Activated CD8-positive, alpha-beta T cell treated with anti-CD3 and anti-CD28 coated beads for 36 hours (primary cell): ENCODE measurements at regions of chr7 and their contacts with region 1.

Region 1: DNA sequence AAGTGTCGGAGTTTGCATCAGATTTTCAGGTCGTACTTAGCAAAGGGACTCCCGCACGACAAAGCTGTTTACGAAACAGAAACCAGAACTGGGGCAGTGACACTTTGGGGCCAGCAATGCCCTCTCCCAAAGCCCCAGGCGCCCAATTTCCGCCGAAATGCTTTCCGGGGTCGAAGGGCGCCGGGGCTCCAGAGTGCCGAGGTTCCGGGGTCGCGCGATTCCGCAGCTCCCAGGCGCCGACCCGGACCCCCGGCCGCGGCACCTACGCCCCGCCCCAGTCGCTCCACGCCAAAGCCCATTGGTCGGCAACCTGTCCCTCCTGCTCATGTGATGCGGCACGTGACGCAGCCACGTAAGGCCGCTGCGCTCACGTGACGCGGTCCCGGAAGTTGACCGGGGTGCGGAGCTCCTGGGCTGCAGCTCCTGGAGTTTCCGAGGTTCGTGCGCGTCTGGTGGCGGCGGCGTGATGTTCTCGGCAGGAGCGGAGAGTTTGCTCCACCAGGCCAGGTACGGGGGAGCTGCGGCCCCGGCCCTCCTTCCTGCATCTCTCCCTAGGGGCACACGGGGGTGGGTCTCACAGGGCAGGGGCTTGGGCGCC is at the start of gene AP5Z1:
- DNase-seq: peak; percentile 97
- ATAC-seq: peak; percentile 96
- H3K4me3 Mint-ChIP-seq: peak within 1 kb of the TSS; percentile 99
- H3K27ac Mint-ChIP-seq: peak within 1 kb of the TSS; percentile 98
- H3K4me1 Mint-ChIP-seq: peaks cover 36% of the 10 kb centered on the region
- H3K27me3 Mint-ChIP-seq: no peaks in the 10 kb centered on the region
- CTCF ChIP-seq: no peak
- total RNA-seq, gene AP5Z1: 21.2 to 21.3 TPM

Region 2: DNA sequence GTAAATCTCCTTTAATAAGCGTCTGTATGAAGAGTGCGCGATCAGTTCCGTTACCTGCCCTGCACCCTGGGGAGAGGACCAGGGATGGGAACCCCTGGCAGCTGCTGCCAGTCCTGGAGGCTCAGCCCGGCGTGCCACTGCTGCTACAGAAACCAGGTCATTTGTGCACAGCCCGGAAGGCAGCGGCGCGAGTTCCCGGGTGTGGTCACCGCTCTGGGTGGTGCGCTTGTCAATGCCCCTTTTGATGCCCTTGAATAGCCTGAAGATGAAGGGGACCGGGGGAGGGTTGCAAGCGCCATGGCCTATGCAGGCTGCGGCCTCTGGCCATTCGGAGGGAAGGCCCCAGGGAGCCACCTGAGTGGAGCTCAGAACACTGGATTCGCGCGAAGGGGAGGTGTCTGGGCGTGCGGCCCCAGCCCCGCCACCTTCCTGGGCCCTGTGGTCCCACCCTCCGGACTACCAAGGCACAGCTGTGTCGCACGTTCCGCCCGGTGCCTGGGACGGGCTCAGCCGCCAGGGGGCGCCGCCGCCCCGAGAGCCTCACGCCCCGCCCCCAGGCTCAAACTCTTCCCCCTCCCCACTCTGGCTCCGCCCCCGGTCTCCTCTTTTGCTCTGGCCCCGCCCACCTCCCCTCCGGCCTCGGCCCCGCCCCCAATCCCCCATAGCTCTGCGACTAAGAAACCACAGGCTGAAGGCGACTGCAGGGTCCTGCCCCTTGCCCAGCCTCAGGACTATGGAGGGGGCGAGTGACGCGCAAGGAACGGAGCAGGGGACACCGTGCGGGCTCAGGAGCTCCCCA is 16.6 kb after region 1 on chr7:
- CTCF ChIA-PET with region 1: interaction called, 11 read pairs
- POLR2A ChIA-PET with region 1: interaction called, 18 read pairs
- intact Hi-C with region 1: no loop called
- DNase-seq: peak; percentile 82
- ATAC-seq: peak; percentile 93
- H3K4me3 Mint-ChIP-seq: no peak overlapping the region
- H3K27ac Mint-ChIP-seq: no peak overlapping the region
- H3K4me1 Mint-ChIP-seq: no peaks in the 10 kb centered on the region
- H3K27me3 Mint-ChIP-seq: no peaks in the 10 kb centered on the region
- CTCF ChIP-seq: peak; percentile 80

Region 3: DNA sequence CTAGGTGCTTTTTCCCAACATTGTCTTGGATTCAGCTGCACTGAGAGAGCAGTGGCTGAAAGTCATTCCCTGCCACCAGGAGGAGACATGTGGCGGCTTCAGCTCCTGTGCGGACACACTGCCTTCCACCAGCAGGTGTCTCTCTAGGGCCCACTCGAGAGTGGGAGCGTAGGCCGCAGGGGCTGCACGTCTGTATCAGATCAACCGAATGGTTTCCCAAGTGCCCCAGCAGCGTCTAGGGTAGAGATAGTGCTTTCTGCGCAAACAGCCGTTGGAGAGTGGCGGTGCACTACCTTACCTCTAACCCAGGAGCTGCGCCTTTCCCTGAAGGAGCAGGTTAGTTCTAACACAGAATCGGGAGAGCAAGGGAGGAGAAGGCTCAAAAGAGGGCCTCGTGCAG is 54.8 kb after region 1 on chr7:
- CTCF ChIA-PET with region 1: no interaction called
- POLR2A ChIA-PET with region 1: no interaction called
- intact Hi-C with region 1: no loop called
- DNase-seq: peak; percentile 78
- ATAC-seq: peak; percentile 94
- H3K4me3 Mint-ChIP-seq: no peak overlapping the region
- H3K27ac Mint-ChIP-seq: no peak overlapping the region
- H3K4me1 Mint-ChIP-seq: peaks cover 2% of the 10 kb centered on the region
- H3K27me3 Mint-ChIP-seq: no peaks in the 10 kb centered on the region
- CTCF ChIP-seq: peak; percentile 70

Region 4: DNA sequence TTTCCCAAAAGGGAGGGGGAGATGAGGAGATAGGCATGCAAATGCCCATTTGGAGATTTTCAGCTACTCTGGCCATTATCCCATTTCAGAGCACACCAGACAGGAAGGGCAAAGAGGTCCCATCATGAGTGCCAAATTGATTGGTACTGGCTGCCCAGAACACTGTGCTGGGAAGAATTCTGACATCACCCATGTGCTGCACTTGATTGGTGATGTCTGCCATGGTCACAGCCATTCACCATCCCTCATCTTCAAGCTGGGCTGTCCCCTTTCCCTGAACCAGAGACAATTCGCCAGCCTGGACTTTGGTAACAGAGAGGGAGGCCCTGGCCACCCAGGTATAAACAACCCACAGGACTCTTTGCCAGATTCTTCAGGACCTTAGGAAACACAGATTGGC is 131.3 kb after region 1 on chr7:
- CTCF ChIA-PET with region 1: no interaction called
- POLR2A ChIA-PET with region 1: no interaction called
- intact Hi-C with region 1: no loop called
- DNase-seq: no peak
- ATAC-seq: no peak
- H3K4me3 Mint-ChIP-seq: no peak overlapping the region
- H3K27ac Mint-ChIP-seq: no peak overlapping the region
- H3K4me1 Mint-ChIP-seq: no peaks in the 10 kb centered on the region
- H3K27me3 Mint-ChIP-seq: no peaks in the 10 kb centered on the region
- CTCF ChIP-seq: no peak